ENCODE measurements at regions of chr3 and their contacts with region 1.

Region 1: DNA sequence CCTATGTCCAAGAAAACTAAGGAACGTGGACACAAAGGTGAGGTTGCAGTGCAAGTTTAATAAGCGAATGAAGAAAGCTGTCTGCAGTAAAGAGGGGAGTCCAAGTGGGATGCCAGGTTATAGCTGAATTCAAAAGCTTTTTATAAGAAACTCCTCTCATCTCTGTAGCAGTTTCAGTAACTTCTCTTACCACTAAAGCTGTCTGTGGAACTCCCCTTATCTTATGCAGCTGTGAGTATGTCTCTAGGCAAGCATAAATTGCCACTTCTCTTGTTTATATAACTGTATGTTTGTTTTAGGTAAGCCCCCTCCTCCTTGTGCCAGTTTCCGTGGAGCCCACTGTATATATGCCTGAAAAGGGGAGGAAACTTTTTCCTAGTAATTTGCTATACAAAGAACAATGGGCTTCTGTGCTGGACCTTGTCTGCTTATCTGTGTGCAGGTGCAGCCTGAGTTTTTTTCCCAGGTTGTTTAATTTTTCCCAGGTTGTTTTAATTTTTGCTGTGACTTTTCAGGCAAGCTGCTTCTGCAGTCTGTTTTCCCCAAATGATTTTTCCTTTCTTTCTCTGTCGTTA is 875.1 kb upstream of the EPHA6 start:
- DNase-seq: no peak
- ATAC-seq: no peak
- H3K4me3 ChIP-seq: no peak overlapping the region
- H3K27ac ChIP-seq: no peak overlapping the region
- H3K4me1 ChIP-seq: no peaks in the 10 kb centered on the region
- H3K27me3 ChIP-seq: no peaks in the 10 kb centered on the region
- CTCF ChIP-seq: no peak
- POLR2A ChIP-seq: no peak

Region 2: DNA sequence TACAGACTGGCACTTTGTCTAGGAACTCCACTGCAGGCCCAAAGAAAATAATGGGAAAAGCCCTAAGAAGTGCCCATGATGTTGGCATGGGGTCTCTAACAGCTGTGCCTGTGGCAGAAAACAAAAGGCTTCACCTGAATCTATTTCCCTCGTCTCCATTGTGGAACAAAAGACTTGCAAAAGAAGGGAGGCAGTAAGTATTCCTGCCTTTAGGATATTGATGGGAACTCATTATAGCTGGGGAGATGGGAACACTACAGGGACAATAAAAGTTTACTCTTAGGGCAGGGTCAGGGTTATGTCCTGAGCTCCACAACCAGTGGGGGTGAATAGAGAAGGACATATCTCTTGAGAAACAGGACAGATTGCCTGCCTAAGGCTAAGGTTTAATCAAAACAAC is 55.5 kb before region 1 on chr3:
- intact Hi-C with region 1: loop called in 1 of 10 experiments (anchors 10 kb)
- DNase-seq: no peak
- ATAC-seq: no peak
- H3K4me3 ChIP-seq: no peak overlapping the region
- H3K27ac ChIP-seq: no peak overlapping the region
- H3K4me1 ChIP-seq: no peaks in the 10 kb centered on the region
- H3K27me3 ChIP-seq: no peaks in the 10 kb centered on the region
- CTCF ChIP-seq: no peak
- POLR2A ChIP-seq: no peak

Region 3: GRCh38 chr3:96039632-96040031 is 100.3 kb after region 1 on chr3:
- intact Hi-C with region 1: no loop called
- DNase-seq: no peak
- ATAC-seq: no peak
- H3K4me3 ChIP-seq: no peak overlapping the region
- H3K27ac ChIP-seq: no peak overlapping the region
- H3K4me1 ChIP-seq: no peaks in the 10 kb centered on the region
- H3K27me3 ChIP-seq: no peaks in the 10 kb centered on the region
- CTCF ChIP-seq: no peak
- POLR2A ChIP-seq: no peak

Measured in heart left ventricle (tissue), 16 donors.